ENCODE measurements at regions of chr4 and their contacts with region 1.

Region 1: GRCh38 chr4:73446336-73446938 is 10.4 kb downstream of the AFP start:
- H3K4me3 Mint-ChIP-seq: no peak overlapping the region
- H3K27ac Mint-ChIP-seq: no peak overlapping the region
- H3K4me1 Mint-ChIP-seq: no peaks in the 10 kb centered on the region
- H3K27me3 Mint-ChIP-seq: no peaks in the 10 kb centered on the region

Region 2: DNA sequence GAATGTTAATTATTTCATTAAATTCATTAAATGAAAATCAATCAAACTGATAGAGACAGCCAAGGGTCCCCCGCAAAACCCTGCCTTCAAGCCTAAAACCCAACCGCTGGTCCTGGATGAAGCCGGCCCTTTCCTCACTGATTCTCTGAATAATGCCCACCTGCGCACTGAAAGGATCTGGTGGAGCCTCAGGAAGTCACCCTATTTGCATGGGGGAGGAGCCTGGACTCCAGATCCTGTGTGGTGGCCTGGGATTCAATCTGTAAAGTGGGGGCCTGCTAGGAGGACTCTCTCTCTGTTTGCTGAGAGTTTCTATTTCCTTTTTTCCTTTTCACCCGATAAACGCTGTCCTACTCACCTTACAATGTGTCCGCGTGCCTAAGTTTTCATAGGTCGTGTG is 779.5 kb before region 1 on chr4:
- intact Hi-C with region 1: no loop called
- H3K4me3 Mint-ChIP-seq: no peak overlapping the region
- H3K27ac Mint-ChIP-seq: no peak overlapping the region
- H3K4me1 Mint-ChIP-seq: no peaks in the 10 kb centered on the region
- H3K27me3 Mint-ChIP-seq: no peaks in the 10 kb centered on the region

Region 3: GRCh38 chr4:73311428-73311827 is 135.0 kb before region 1 on chr4:
- intact Hi-C with region 1: loop called (anchors 2 kb)
- H3K4me3 Mint-ChIP-seq: no peak overlapping the region
- H3K27ac Mint-ChIP-seq: no peak overlapping the region
- H3K4me1 Mint-ChIP-seq: peaks cover 12% of the 10 kb centered on the region
- H3K27me3 Mint-ChIP-seq: no peaks in the 10 kb centered on the region